Breast epithelium (tissue), 4 donors: ENCODE measurements at regions of chr20 and their contacts with region 1.

Region 1: GRCh38 chr20:45415774-45416637 is at the start of gene PIGT:
- DNase-seq: peak; percentile 74 to 84
- H3K4me3 ChIP-seq: peak within 1 kb of the TSS; percentile 64 to 92 (median 69)
- H3K27ac ChIP-seq: peak within 1 kb of the TSS; percentile 91 to 92
- H3K4me1 ChIP-seq: peaks cover 5 to 13% of the 10 kb centered on the region in 2 donors
- H3K27me3 ChIP-seq: no peaks in the 10 kb centered on the region
- CTCF ChIP-seq: peak in 1 of 3 donors; percentile 11
- POLR2A ChIP-seq: peak; percentile 88
- total RNA-seq, gene PIGT: 74.1 to 103 (median 76.7) TPM

Region 2: GRCh38 chr20:44720617-44720993 is 695.4 kb before region 1 on chr20:
- intact Hi-C with region 1: loop called (anchors 5 kb)
- DNase-seq: peak in 1 of 2 donors; percentile 83
- H3K4me3 ChIP-seq: peak overlapping the region in 1 of 3 donors; percentile 58
- H3K27ac ChIP-seq: peak overlapping the region; percentile 56 to 69
- H3K4me1 ChIP-seq: peaks cover 3 to 13% of the 10 kb centered on the region in 2 donors
- H3K27me3 ChIP-seq: no peaks in the 10 kb centered on the region
- CTCF ChIP-seq: no peak
- POLR2A ChIP-seq: no peak

Region 3: GRCh38 chr20:45373353-45374100 is 42.5 kb before region 1 on chr20:
- intact Hi-C with region 1: loop called (anchors 10 kb)
- DNase-seq: peak; percentile 67 to 95
- H3K4me3 ChIP-seq: peak overlapping the region; percentile 48 to 68 (median 53)
- H3K27ac ChIP-seq: peak overlapping the region; percentile 60 to 75
- H3K4me1 ChIP-seq: no peaks in the 10 kb centered on the region
- H3K27me3 ChIP-seq: no peaks in the 10 kb centered on the region
- CTCF ChIP-seq: peak; percentile 74 to 85 (median 80)
- POLR2A ChIP-seq: no peak